Heart right ventricle (tissue), 16 donors: ENCODE measurements at regions of chr20 and their contacts with region 1.

Region 1: GRCh38 chr20:42461965-42462593 is 727.6 kb downstream of the PTPRT start:
- DNase-seq: no peak
- ATAC-seq: peak in 4 of 8 donors; percentile 35 to 75 (median 60)
- H3K4me3 ChIP-seq: no peak overlapping the region
- H3K27ac ChIP-seq: peak overlapping the region in 1 of 10 donors; percentile 38
- H3K4me1 ChIP-seq: peaks cover 0 to 17% (median 5%) of the 10 kb centered on the region in 9 donors
- H3K27me3 ChIP-seq: no peaks in the 10 kb centered on the region
- CTCF ChIP-seq: no peak

Region 2: GRCh38 chr20:42319252-42320013 is 142.6 kb before region 1 on chr20:
- intact Hi-C with region 1: loop called in 1 of 10 experiments (anchors 10 kb)
- DNase-seq: no peak
- ATAC-seq: peak in 1 of 8 donors; percentile 34
- H3K4me3 ChIP-seq: no peak overlapping the region
- H3K27ac ChIP-seq: peak overlapping the region in 1 of 10 donors; percentile 17
- H3K4me1 ChIP-seq: peaks cover 0 to 18% (median 0%) of the 10 kb centered on the region in 9 donors
- H3K27me3 ChIP-seq: no peaks in the 10 kb centered on the region
- CTCF ChIP-seq: no peak

Region 3: DNA sequence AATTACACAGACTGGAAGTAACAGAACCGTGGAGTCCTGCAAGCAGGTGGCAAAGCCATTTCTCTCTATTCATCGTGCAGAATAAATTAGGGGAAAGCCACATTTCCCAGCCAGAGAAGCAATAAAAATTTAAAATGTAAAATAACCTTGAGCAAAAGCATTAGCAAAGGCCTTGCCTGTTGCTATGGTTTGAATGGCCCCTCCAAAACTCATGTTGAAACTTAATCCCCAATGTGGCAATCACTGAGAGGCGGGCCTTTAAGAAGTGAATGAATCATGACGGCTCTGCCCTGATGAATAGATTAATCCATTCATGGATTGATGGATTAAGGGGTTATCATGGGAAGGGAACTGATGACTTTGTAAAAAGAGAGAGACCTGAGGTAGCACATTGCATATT is 48.6 kb after region 1 on chr20:
- intact Hi-C with region 1: loop called in 1 of 10 experiments (anchors 10 kb)
- DNase-seq: no peak
- ATAC-seq: no peak
- H3K4me3 ChIP-seq: no peak overlapping the region
- H3K27ac ChIP-seq: no peak overlapping the region
- H3K4me1 ChIP-seq: no peaks in the 10 kb centered on the region
- H3K27me3 ChIP-seq: no peaks in the 10 kb centered on the region
- CTCF ChIP-seq: no peak

Region 4: GRCh38 chr20:42754706-42755105 is 292.6 kb after region 1 on chr20:
- intact Hi-C with region 1: no loop called
- DNase-seq: no peak
- ATAC-seq: peak in 1 of 8 donors; percentile 73
- H3K4me3 ChIP-seq: no peak overlapping the region
- H3K27ac ChIP-seq: no peak overlapping the region
- H3K4me1 ChIP-seq: no peaks in the 10 kb centered on the region
- H3K27me3 ChIP-seq: no peaks in the 10 kb centered on the region
- CTCF ChIP-seq: no peak